Psoas muscle (tissue), 8 donors: ENCODE measurements at regions of chr17 and their contacts with region 1.

Region 1: GRCh38 chr17:49548506-49549310 is 27.0 kb upstream of the NXPH3 start:
- DNase-seq: peak in 1 of 2 donors; percentile 72
- ATAC-seq: peak; percentile 70 to 83 (median 77)
- H3K4me3 ChIP-seq: no peak overlapping the region
- H3K27ac ChIP-seq: no peak overlapping the region
- H3K4me1 ChIP-seq: no peaks in the 10 kb centered on the region
- H3K27me3 ChIP-seq: peaks cover 0 to 2% (median 0%) of the 10 kb centered on the region in 3 donors
- CTCF ChIP-seq: peak; percentile 65

Region 2: DNA sequence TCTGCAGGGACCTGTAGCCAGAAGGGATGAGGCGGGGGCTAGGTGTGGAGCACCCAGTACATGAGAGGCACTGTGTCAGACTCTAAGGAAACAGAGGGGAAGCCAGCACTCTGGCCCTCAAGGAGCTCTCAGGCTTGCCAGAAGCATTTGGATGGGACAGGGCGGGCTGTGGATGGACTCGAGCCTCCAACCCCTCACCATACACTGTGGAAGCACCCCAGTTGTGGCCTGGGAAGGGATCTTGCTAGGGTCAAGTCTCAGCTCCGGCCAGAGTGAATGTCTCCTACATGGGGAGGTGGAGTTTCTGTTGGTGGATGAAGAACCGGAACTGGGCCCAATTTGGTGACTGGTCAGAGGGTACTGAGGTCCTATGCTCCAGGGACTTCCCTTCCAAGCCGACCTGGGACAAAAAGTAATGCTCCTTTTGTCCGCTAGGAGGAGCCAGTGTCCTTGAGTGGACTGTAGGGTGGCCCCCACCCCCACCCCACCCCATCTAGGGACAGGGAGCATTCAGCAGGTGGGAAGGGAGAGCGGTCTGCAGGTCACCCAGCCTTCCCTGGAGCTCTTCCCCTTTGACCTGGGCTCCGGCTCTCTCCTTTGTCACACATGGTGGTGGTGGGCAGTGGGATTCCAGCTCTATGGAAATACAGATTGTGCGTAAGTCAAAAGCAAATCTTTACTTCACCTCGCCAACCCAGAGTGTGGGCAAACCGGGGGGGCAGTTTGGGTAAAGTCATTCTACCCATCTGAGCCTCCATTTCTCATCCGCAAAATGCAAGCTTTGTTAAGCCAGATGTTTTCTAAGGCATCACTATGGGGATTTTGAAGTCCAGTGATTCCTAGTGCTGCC is 113.7 kb before region 1 on chr17:
- intact Hi-C with region 1: loop called in 1 of 2 experiments (anchors 2 kb)
- DNase-seq: no peak
- ATAC-seq: peak; percentile 54 to 84 (median 80)
- H3K4me3 ChIP-seq: no peak overlapping the region
- H3K27ac ChIP-seq: no peak overlapping the region
- H3K4me1 ChIP-seq: no peaks in the 10 kb centered on the region
- H3K27me3 ChIP-seq: peaks cover 0 to 13% (median 5%) of the 10 kb centered on the region in 3 donors
- CTCF ChIP-seq: peak; percentile 72

Region 3: GRCh38 chr17:49496183-49496866 is 52.4 kb before region 1 on chr17:
- intact Hi-C with region 1: loop called in 1 of 2 experiments (anchors 2 kb)
- DNase-seq: peak; percentile 82 to 90
- ATAC-seq: peak; percentile 85 to 92 (median 86)
- H3K4me3 ChIP-seq: peak overlapping the region; percentile 71
- H3K27ac ChIP-seq: no peak overlapping the region
- H3K4me1 ChIP-seq: peaks cover 26% of the 10 kb centered on the region
- H3K27me3 ChIP-seq: peaks cover 0 to 67% (median 7%) of the 10 kb centered on the region in 3 donors
- CTCF ChIP-seq: peak; percentile 86

Region 4: DNA sequence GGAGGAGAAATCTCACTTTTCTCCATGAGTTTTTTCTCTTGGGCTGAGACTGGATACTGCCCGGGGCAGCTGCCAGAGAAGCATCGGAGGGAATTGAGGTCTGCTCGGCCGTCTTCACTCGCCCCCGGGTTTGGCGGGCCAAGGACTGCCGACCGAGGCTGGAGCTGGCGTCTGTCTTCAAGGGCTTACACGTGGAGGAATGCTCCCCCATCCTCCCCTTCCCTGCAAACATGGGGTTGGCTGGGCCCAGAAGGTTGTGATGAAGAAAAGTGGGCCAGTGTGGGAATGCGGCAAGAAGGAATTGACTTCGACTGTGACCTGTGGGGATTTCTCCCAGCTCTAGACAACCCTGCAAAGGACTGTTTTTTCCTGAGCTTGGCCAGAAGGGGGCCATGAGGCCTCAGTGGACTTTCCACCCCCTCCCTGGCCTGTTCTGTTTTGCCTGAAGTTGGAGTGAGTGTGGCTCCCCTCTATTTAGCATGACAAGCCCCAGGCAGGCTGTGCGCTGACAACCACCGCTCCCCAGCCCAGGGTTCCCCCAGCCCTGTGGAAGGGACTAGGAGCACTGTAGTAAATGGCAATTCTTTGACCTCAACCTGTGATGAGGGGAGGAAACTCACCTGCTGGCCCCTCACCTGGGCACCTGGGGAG is 34.5 kb before region 1 on chr17:
- intact Hi-C with region 1: loop called in 1 of 2 experiments (anchors 5 kb)
- DNase-seq: peak in 1 of 2 donors; percentile 65
- ATAC-seq: peak in 3 of 4 donors; percentile 4 to 18 (median 5)
- H3K4me3 ChIP-seq: no peak overlapping the region
- H3K27ac ChIP-seq: peak overlapping the region; percentile 72
- H3K4me1 ChIP-seq: peaks cover 20% of the 10 kb centered on the region
- H3K27me3 ChIP-seq: peaks cover 0 to 4% (median 0%) of the 10 kb centered on the region in 3 donors
- CTCF ChIP-seq: peak; percentile 7

Region 5: DNA sequence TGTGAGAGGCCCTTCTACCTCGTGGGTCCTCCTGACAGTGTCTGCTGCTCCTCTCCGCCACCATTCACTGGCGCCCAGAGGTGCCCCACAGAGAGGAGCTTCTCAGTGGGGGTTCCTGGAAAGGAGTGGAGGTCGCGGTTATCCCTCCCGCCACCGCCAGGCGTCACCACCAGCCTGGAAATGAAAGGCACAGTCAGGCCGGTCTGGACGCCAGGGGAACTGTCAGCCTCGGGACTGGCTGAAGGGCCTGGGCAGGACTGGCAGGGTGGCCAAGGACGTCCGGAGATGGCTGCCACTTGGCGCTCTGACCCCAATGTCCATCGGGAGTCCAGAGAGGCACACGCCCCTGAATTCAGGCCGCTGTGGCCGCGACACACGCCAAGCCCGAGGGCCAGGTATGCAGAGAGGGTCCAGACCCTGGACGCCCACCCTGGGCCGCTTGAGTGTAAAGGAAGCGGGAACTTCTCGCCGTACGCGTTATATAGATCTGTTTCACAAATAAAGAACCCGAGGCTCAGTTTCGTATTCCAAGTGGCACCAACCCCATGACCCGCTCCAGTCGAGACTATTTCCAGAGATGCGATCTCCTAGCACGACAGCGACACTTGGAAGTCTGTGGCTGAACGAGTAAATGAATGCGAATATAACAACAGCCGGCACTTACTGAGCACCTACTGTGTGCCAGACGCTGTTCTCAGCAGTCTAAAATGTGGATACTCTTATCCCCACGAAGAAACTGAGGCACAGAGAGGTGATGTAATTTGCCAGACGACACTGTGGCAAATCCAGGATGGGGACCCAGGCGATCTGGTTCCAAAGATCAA is 19.4 kb after region 1 on chr17:
- intact Hi-C with region 1: no loop called
- DNase-seq: peak; percentile 92 to 96
- ATAC-seq: peak; percentile 73 to 84 (median 78)
- H3K4me3 ChIP-seq: peak overlapping the region; percentile 73
- H3K27ac ChIP-seq: peak overlapping the region; percentile 85
- H3K4me1 ChIP-seq: peaks cover 25% of the 10 kb centered on the region
- H3K27me3 ChIP-seq: no peaks in the 10 kb centered on the region
- CTCF ChIP-seq: peak; percentile 97

Region 6: GRCh38 chr17:49634485-49634860 is 85.8 kb after region 1 on chr17:
- intact Hi-C with region 1: no loop called
- DNase-seq: no peak
- ATAC-seq: no peak
- H3K4me3 ChIP-seq: peak overlapping the region; percentile 34
- H3K27ac ChIP-seq: peak overlapping the region; percentile 71
- H3K4me1 ChIP-seq: peaks cover 63% of the 10 kb centered on the region
- H3K27me3 ChIP-seq: no peaks in the 10 kb centered on the region
- CTCF ChIP-seq: no peak